Right cardiac atrium (tissue), 5 donors: ENCODE measurements at regions of chr1 and their contacts with region 1.

Region 1: GRCh38 chr1:66253330-66253921 is 280.5 kb upstream of the SGIP1 start:
- DNase-seq: no peak
- ATAC-seq: peak; percentile 84 to 89
- H3K4me3 ChIP-seq: no peak overlapping the region
- H3K27ac ChIP-seq: no peak overlapping the region
- H3K4me1 ChIP-seq: no peaks in the 10 kb centered on the region
- H3K27me3 ChIP-seq: no peaks in the 10 kb centered on the region

Region 2: DNA sequence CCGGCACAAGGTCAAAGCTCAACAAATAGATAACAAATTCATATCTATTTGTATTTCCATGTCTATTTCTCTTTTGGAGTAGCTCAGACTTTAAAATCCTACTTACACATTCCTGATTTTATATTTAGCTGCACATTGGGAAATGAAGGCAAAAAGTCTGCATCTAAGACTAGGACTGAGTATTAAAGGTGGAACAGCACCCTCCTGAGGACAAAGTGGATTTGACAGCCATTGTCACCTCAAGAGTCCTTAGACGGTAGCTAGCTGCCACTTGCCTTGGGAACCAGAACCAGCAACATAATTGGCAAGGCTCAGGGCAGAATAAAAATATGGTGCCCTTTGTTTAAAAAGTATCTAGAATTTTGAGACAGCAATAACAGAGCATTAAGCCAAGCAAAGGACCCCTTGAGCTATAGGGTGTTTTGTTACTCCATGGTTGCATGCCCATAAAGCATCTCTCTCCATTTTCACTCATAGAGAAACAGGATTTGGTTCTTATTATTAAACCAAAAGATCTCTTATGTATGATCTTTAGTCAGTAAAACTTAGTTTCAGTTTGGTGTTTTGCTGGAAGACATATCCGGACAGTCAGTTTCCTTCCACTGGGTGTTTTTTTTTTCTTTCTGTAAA is 250.5 kb after region 1 on chr1:
- intact Hi-C with region 1: loop called in 1 of 4 experiments (anchors 10 kb)
- DNase-seq: peak in 1 of 3 donors; percentile 39
- ATAC-seq: peak; percentile 71 to 72
- H3K4me3 ChIP-seq: no peak overlapping the region
- H3K27ac ChIP-seq: no peak overlapping the region
- H3K4me1 ChIP-seq: no peaks in the 10 kb centered on the region
- H3K27me3 ChIP-seq: no peaks in the 10 kb centered on the region

Region 3: DNA sequence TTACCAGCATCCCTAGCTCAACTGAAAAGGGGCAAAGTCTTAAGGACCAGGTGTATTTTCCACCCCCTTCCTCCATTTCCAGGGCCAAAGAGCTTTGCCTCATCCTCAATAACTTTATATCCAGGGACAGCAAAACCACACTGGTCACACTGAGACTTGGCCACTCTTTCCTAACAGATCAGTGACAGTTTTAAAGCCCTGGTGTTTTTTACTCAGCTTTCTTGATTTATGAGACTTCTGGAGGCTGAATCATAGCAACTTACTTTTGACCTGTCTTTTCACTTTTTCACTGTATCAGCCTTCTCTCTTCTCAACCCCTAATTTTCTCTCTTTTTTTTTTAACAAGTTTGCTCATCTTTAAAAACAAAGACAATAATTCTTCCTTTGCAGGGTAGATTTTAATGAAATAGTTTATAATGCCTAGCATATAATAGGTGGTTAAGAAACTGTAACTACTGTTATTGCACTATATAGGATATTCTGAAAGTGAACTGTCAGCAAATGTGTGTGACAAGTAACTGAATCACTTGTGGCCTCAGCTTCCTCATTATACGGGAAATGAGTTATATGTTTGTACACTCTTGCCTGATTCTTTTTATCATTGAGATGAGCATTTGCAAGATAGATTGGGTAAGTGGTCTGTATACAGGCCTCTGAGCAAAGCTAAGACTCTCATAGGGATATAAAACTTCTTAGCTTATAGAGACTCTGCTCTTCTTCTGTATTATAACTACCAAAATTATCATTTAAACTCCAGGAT is 479.2 kb after region 1 on chr1:
- intact Hi-C with region 1: loop called in 2 of 4 experiments (anchors 5 to 10 kb)
- DNase-seq: no peak
- ATAC-seq: peak in 1 of 2 donors; percentile 16
- H3K4me3 ChIP-seq: no peak overlapping the region
- H3K27ac ChIP-seq: no peak overlapping the region
- H3K4me1 ChIP-seq: no peaks in the 10 kb centered on the region
- H3K27me3 ChIP-seq: no peaks in the 10 kb centered on the region